Activated B cell treated with CpG ODN at 0.5 μM for 24 hours (primary cell): ENCODE measurements at regions of chr3 and their contacts with region 1.

Region 1: GRCh38 chr3:154642145-154642544 is 212.2 kb upstream of the GPR149 start:
- DNase-seq: no peak
- ATAC-seq: no peak
- H3K4me3 Mint-ChIP-seq: no peak overlapping the region
- H3K27ac Mint-ChIP-seq: no peak overlapping the region
- H3K4me1 Mint-ChIP-seq: no peaks in the 10 kb centered on the region
- H3K27me3 Mint-ChIP-seq: no peaks in the 10 kb centered on the region
- CTCF ChIP-seq: no peak

Region 2: DNA sequence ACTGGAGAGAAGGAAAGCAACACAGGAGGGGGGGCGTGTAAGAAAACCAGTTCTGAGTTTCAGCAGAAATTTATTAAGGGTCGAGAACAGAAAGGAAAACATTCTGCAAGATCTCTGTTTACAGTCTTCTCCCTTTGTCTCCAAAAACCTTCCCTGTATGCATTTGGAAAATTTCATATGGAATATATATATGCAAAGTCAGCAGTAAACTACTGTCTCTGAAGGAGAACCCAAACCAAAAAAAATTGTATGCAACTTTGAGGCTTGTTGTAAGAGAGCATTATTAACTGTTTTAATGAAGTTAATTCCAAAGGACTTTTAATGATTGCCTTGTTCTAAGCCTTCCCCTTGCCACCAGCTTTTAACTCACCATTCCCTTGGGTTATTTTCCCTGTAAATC is 26.0 kb after region 1 on chr3:
- CTCF ChIA-PET with region 1: no interaction called
- POLR2A ChIA-PET with region 1: no interaction called
- intact Hi-C with region 1: loop called (anchors 2 kb)
- DNase-seq: no peak
- ATAC-seq: no peak
- H3K4me3 Mint-ChIP-seq: no peak overlapping the region
- H3K27ac Mint-ChIP-seq: no peak overlapping the region
- H3K4me1 Mint-ChIP-seq: no peaks in the 10 kb centered on the region
- H3K27me3 Mint-ChIP-seq: no peaks in the 10 kb centered on the region
- CTCF ChIP-seq: no peak